Dorsolateral prefrontal cortex (tissue), 120 donors: ENCODE measurements at regions of chr7 and their contacts with region 1.

Region 1: DNA sequence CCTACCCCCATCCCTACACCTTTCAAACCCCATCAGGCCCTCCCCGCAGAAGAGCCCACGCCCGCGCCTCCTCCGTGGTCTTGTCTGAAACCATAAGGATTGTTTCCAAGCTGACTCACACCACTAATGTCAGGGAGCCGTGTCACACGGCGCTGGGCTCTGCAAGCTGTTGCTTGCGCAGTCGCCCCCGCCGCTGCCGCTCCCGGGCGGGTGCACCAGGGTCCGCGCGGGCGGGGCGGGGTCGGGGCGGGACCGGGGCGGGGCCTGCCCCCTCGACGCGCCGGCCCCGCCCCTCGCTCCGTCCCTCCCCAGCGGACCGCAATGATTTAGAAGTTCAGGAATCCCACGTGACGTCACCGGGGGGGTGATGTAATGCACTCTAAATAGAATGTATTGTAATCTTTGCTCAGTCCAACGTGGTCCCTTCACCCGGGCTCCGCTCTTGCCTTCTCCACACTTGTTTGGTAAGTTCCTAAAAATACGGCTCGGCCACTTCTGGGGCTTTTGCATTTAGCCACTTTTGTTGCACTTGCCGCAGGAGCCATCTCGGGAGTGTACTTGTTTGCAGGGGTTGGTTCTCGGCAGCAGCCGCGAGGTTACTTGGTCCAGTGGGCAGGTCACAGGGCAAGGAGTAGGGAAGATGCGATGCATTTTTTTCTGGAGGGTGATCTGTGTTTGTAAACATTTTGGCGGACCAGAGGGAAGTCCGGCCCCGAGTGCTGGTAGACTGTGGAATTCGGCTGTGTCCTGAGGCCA is 3.2 kb upstream of the CREB5 start:
- DNase-seq: peak; percentile 89 to 100 (median 96)
- H3K4me3 ChIP-seq: peak overlapping the region; percentile 50 to 90 (median 73)
- H3K27ac ChIP-seq: peak overlapping the region; percentile 30 to 97 (median 93)
- H3K27me3 ChIP-seq: peaks cover 0 to 32% (median 4%) of the 10 kb centered on the region in 45 donors
- CTCF ChIP-seq: no peak

Region 2: DNA sequence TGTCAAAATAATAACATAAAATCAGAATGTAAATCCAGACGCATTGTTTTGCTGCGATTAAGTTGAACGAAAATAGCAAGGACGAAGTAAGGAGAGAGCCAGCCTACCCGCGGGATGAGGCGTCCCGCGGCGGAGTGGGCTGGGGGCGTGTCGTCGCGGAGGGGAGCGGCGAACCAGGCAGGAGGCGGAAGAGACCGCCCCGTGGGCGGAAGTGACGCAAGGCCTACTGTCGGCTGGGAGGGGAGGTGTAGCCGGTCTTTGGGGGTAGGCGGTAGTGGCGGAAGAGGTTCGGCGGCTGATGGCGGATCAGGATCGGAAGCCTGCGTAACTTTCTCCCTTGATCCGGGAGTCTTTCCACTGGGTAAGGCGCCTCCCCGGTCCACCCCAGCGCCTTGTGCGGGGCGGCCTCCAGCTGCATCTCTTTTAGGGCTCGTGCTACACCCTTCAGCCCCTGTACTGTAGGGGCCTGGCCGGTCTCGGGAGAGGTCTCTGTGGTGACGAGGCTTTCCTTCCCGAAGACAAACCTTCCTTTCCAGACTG is 669.2 kb before region 1 on chr7 and contains the start of gene TAX1BP1:
- intact Hi-C with region 1: no loop called
- DNase-seq: peak; percentile 88 to 98 (median 96)
- H3K4me3 ChIP-seq: peak within 1 kb of the TSS; percentile 67 to 99 (median 93)
- H3K27ac ChIP-seq: peak within 1 kb of the TSS; percentile 31 to 99 (median 93)
- H3K27me3 ChIP-seq: no peaks in the 10 kb centered on the region
- CTCF ChIP-seq: peak in 23 of 56 donors; percentile 3 to 52 (median 25)
- total RNA-seq, gene TAX1BP1: 83.6 to 164 (median 133) TPM

Region 3: GRCh38 chr7:28207486-28208158 is 201.5 kb before region 1 on chr7:
- intact Hi-C with region 1: no loop called
- DNase-seq: no peak
- H3K4me3 ChIP-seq: no peak overlapping the region
- H3K27ac ChIP-seq: no peak overlapping the region
- H3K27me3 ChIP-seq: no peaks in the 10 kb centered on the region
- CTCF ChIP-seq: no peak

Region 4: GRCh38 chr7:28239823-28240204 is 169.3 kb before region 1 on chr7:
- intact Hi-C with region 1: no loop called
- DNase-seq: peak in 1 of 10 donors; percentile 12
- H3K4me3 ChIP-seq: no peak overlapping the region
- H3K27ac ChIP-seq: no peak overlapping the region
- H3K27me3 ChIP-seq: no peaks in the 10 kb centered on the region
- CTCF ChIP-seq: no peak

Region 5: DNA sequence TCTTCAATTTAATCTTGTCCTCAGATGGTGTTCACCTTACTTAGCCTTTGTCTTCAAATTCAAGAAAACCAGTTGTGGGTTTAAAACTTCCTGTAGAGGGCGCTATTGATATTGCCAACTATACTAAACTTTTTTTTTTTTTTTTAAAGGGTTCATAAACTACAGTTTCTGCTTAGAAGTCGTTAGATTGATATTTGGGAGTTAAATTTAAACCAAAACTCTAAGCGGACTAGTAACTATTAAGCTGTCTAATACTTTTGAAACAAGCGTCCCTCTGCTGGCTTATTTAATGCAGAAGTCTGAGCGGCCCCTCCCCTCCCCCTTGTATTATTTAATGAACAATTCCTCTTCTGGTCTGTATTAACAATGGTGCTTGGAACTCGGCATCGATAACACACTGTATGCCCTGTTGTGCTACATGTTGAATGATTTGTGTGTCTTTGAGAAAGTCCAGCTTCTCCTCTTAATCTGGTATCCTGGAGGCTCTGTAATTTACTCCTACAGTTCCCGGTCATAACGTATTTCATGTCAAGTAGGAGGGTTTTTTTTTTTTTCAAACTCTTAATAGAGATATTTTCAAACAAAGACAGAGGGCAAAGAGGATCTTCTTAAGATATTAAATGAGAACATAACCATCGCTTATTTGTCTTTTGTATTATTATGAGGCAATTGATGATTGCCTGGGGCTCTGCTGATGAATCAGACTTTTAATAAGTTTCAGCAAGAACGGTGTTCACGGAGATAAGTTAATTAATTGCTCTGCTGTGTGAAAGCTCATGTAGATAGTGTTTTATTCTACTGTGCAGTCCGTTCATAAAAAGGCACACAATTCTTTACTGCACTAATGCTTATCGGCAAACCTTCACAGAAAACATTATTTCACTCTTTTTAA is 19.4 kb before region 1 on chr7:
- intact Hi-C with region 1: loop called in 1 of 2 experiments (anchors 2 kb)
- DNase-seq: peak in 1 of 10 donors; percentile 33
- H3K4me3 ChIP-seq: peak overlapping the region in 58 of 59 donors; percentile 8 to 67 (median 44)
- H3K27ac ChIP-seq: peak overlapping the region in 34 of 59 donors; percentile 0 to 79 (median 52)
- H3K27me3 ChIP-seq: peaks cover 0 to 4% (median 0%) of the 10 kb centered on the region in 45 donors
- CTCF ChIP-seq: peak; percentile 73 to 92 (median 84)

Region 6: GRCh38 chr7:28479507-28479947 is 70.4 kb after region 1 on chr7:
- intact Hi-C with region 1: loop called in 1 of 2 experiments (anchors 10 kb)
- DNase-seq: no peak
- H3K4me3 ChIP-seq: no peak overlapping the region
- H3K27ac ChIP-seq: no peak overlapping the region
- H3K27me3 ChIP-seq: peaks cover 0 to 7% (median 0%) of the 10 kb centered on the region in 45 donors
- CTCF ChIP-seq: no peak

Region 7: DNA sequence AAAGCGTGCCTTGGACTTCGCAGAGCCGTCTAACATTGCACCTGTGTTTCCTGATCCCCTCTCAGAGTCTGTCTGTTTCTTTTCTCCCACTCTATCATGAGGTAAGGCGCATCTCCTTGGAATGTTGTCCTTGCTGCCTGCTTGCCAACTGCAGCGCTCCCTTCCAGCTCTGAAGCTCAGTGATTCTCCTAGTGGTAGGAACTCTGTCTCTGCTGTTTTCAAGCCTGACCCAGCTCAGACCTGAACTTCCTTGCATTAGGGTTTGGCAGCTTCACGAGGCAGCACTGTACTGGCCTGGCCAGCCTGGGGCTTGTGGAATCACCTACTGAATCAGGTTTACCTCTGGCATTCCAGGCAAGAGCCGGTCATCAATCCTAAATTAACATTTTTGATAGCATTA is 127.1 kb after region 1 on chr7:
- intact Hi-C with region 1: loop called in 1 of 2 experiments (anchors 5 kb)
- DNase-seq: no peak
- H3K4me3 ChIP-seq: no peak overlapping the region
- H3K27ac ChIP-seq: no peak overlapping the region
- H3K27me3 ChIP-seq: peaks cover 0 to 2% (median 0%) of the 10 kb centered on the region in 45 donors
- CTCF ChIP-seq: peak in 25 of 56 donors; percentile 7 to 42 (median 20)

Region 8: DNA sequence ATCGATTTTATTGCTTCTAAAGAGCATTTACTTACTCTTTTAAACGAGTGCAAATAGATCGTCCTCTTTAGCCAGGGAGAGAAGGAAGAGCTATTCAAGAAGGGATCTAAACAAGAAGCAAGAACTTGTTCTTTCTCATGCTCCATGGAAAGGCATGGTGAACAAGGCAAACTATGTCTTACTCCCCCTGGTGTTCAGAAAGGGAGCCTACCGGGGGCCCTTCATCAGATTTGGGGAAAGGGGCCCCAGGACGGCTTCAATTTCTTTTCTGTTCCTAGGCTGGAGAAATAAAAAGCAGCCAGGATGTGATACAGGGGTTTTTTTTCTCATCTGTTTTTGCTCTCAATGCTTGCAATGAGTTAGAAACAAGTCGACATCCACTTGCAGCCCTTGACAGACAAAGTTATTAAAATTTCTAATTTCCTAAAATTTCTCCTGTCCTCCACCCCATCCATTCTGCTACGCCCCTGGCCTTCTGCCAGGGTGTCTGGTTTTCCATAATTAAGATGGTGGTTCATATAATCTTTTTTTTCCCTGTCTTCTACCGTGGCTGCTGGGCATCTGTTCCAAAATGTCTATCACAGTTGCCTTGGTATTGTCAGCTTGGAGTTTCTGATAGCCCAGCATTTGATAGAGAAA is 217.6 kb after region 1 on chr7:
- intact Hi-C with region 1: loop called (anchors 5 kb)
- DNase-seq: no peak
- H3K4me3 ChIP-seq: no peak overlapping the region
- H3K27ac ChIP-seq: no peak overlapping the region
- H3K27me3 ChIP-seq: no peaks in the 10 kb centered on the region
- CTCF ChIP-seq: peak; percentile 18 to 78 (median 64)